HEK293 (cell line): ENCODE measurements at regions of chr10 and their contacts with region 1.

Region 1: DNA sequence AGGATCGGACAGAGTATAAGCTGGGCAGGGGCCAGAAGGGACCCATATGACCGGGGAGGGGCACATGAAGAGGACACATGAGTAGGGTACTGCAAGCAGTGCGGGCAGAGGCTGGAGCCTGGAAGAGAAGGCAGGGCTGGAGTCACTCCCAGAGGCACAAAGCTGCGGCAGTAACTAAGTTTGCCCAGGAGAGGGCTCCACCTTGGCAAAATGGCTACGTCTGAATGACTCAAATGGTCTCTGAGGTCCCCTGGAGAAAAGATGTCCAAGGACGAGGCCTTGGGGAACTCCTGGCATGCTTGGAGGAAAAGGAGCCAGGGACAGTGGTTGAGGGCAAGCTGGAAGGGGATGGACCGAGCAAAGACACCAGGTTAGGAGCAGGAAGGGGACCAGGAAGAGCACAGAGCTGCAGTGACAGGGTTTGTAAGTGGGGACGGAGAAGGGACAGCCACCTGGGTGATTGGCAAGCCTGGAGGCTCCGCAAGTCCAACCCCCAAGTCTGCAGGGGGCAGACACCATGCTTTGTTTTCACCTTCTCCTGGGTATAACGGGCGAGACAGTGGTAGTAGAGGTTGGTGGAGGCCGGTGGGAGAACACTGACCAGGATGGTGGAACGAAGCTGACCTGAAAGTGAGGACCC is 43.1 kb upstream of the LBX1 start:
- H3K4me3 ChIP-seq: no peak overlapping the region
- H3K27ac ChIP-seq: no peak overlapping the region
- H3K4me1 ChIP-seq: no peaks in the 10 kb centered on the region
- CTCF ChIP-seq: peak; percentile 92

Region 2: GRCh38 chr10:101284116-101284743 is 11.9 kb after region 1 on chr10:
- CTCF ChIA-PET with region 1: interaction called, 124 read pairs
- POLR2A ChIA-PET with region 1: no interaction called
- H3K4me3 ChIP-seq: no peak overlapping the region
- H3K27ac ChIP-seq: no peak overlapping the region
- H3K4me1 ChIP-seq: peaks cover 8% of the 10 kb centered on the region
- CTCF ChIP-seq: no peak

Region 3: DNA sequence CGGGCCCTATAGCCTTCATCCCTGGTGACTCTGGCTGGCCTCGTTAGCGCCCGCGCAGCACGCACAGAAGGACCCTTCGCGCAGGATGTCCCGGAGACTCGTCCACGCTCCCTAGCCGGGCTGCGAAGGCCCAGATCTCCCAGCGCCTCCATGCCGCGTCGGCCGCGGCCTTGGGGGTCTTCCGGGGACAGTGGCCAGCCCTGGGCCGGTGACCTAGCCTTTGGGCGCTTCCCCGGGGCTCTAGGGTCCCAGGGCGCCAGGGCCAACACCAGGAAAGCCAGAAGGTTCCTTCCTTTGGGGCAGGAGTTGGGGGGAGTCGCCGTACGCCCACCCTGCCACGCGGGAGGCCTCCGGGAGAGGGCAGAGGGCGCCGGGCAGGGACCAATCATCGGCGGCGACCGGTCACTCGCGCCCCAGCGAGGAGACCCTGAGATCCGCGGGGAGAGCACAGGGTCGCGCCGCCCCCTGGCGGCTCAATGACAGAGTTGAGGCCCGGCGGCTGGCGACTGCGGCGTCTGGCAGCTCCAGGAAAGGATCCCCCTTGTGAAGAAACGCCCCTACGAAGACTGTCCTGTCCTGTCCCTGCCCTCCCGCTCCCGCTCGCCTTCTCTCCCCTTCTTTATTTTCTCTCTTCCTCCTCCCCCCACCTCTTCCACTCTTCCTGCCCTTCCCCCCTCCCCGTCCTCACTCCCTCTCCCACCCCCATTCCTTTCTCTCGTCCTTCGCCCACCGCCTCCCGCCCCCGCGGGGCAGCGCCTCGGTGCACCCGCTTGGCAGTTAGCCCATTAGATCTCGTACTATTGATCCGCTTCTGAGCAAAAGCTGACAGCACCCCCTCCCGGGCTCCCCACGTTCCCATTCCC is 19.2 kb after region 1 on chr10:
- CTCF ChIA-PET with region 1: interaction called, 124 read pairs
- POLR2A ChIA-PET with region 1: no interaction called
- H3K4me3 ChIP-seq: peak overlapping the region; percentile 51
- H3K27ac ChIP-seq: peak overlapping the region; percentile 24; the same call in 1 of the 2 replicates
- H3K4me1 ChIP-seq: peaks cover 3% of the 10 kb centered on the region; the same call in 1 of the 2 replicates
- CTCF ChIP-seq: peak; percentile 90

Region 4: GRCh38 chr10:101644002-101644401 is 371.7 kb after region 1 on chr10:
- CTCF ChIA-PET with region 1: no interaction called
- POLR2A ChIA-PET with region 1: no interaction called
- H3K4me3 ChIP-seq: no peak overlapping the region
- H3K27ac ChIP-seq: no peak overlapping the region
- H3K4me1 ChIP-seq: no peaks in the 10 kb centered on the region
- CTCF ChIP-seq: no peak